ENCODE measurements at regions of chr19 and their contacts with region 1.

Region 1: GRCh38 chr19:11035441-11036377 is 53.6 kb upstream of the LDLR start:
- DNase-seq: peak; percentile 94 to 98 (median 95)
- ATAC-seq: peak; percentile 99
- H3K4me3 ChIP-seq: no peak overlapping the region
- H3K4me1 ChIP-seq: peaks cover 12% of the 10 kb centered on the region
- CTCF ChIP-seq: peak; percentile 90

Region 2: GRCh38 chr19:11090054-11090900 is 54.6 kb after region 1 on chr19:
- intact Hi-C with region 1: loop called in 1 of 2 experiments (anchors 10 kb)
- DNase-seq: peak; percentile 98 to 100 (median 98)
- ATAC-seq: peak; percentile 79
- H3K4me3 ChIP-seq: peak overlapping the region; percentile 64
- H3K4me1 ChIP-seq: peaks cover 43% of the 10 kb centered on the region
- CTCF ChIP-seq: no peak

Region 3: DNA sequence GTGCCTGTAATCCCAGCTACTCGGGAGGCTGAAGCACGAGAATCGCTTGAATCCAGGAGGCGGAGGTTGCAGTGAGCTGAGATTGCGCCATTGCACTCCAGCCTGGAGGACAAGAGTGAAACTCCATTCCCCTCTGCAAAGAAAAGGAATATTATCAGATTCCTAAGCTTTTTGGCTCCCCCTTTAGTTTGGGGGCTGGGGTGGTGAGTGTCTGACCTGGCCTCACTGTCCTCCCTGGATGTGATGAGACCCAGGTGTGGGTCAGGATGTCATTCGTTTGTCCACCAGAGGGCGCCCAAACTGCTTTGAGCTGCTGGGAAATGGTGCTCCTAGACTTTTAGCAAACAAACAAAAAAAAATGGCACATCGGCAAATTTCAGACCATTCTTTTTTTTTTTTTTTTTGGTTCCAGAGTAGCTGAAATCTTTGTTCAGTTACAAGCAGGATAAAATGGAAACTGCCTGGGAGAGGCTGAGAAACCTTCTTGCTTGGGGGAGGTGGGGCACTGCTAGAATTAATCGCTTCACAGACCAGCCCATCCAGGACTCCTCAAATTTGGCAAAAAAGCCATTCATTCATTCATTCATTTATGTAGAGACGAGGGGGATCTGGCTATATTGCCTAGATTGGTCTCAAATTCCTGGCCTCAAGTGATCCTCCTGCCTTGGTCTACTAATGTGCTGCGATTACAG is 90.4 kb after region 1 on chr19:
- intact Hi-C with region 1: loop called in 1 of 2 experiments (anchors 10 kb)
- DNase-seq: peak; percentile 67 to 90 (median 82)
- ATAC-seq: peak; percentile 68
- H3K4me3 ChIP-seq: no peak overlapping the region
- H3K4me1 ChIP-seq: no peaks in the 10 kb centered on the region
- CTCF ChIP-seq: peak; percentile 51

Measured in mucosa of descending colon (tissue), 3 donors.